ENCODE measurements at regions of chr11 and their contacts with region 1.

Region 1: DNA sequence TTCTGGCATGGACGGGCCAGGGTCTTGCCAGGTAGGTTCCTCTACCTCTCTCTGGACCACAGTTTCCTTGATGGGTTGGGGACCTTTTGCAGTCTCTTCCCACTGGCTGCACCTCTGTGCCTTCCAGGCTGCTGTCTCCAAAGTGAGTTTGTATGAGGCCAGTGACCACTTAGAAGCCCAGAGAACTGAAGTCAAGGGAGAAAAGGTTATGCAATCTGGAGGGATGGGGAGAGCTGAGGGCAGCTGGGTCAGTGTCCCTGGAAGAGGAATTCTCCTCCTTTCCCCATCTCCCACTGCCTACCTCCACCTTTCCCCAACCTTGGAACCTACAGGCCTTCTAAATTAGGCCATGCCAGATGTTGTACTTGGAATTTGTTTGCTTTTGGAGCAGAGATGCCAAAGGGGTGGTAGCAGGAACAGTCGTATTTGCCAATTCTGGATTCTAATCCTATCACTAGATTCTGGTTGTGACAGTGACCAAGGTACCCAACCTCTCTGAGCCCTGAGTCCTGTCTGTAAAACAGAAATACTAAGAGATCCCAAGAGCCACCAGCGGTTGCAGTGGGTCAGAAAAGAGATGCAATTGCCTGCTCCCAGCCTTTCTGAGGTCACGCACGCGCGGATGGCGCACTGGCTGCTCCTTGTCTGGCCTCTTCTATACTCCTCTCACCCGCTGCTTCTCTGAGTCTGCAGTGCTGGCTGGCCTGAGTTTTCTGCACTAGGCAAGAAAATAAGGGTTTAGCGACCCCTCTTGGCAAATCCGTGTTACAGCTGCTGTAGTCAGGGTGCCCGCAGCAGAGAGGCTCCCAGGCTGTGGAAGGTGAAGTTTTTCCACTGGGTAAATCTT is 10.7 kb upstream of the ACCSL start:
- DNase-seq: peak; percentile 94
- H3K4me3 ChIP-seq: no peak overlapping the region
- H3K27ac ChIP-seq: no peak overlapping the region
- H3K4me1 ChIP-seq: no peaks in the 10 kb centered on the region
- H3K27me3 ChIP-seq: no peaks in the 10 kb centered on the region
- CTCF ChIP-seq: peak; percentile 100

Region 2: GRCh38 chr11:43944761-43945311 is 92.2 kb before region 1 on chr11:
- CTCF ChIA-PET with region 1: interaction called, 4 read pairs
- POLR2A ChIA-PET with region 1: no interaction called
- intact Hi-C with region 1: loop called (anchors 2 kb)
- DNase-seq: peak; percentile 73
- H3K4me3 ChIP-seq: no peak overlapping the region
- H3K27ac ChIP-seq: no peak overlapping the region
- H3K4me1 ChIP-seq: peaks cover 21% of the 10 kb centered on the region
- H3K27me3 ChIP-seq: peaks cover 67% of the 10 kb centered on the region
- CTCF ChIP-seq: peak; percentile 100

Region 3: DNA sequence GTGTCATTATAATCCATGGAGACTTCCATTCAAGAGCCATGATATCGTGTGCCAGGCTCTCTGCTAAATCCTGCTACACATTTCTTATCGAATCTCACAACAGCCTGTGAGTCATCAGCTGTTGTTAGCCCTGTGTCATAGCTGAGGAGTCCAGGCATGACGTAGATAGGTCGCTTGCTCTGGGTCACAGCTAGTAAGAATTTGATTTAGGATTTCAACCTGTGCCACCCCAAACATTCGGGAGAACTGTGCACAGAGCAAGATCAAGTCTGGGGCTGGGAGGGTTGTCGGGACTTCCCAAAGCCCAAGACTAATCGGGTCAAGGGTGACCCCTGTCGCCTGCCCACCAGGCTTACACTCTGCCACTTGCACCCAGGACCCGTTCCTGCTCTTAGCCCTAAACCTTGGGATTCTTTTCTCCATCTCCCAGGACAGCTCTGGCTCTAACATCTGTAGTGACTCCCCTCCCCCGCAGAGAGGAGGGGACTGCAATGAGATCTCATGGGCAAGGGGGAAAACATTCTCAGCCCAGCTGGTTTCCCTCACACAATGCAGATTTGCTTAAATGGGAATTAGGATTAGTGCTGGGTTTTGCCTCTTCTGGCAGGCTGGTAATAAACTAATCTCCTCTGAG is 724.0 kb after region 1 on chr11:
- CTCF ChIA-PET with region 1: no interaction called
- POLR2A ChIA-PET with region 1: no interaction called
- intact Hi-C with region 1: no loop called
- DNase-seq: peak; percentile 93
- H3K4me3 ChIP-seq: no peak overlapping the region
- H3K27ac ChIP-seq: peak overlapping the region; percentile 60
- H3K4me1 ChIP-seq: peaks cover 48% of the 10 kb centered on the region
- H3K27me3 ChIP-seq: no peaks in the 10 kb centered on the region
- CTCF ChIP-seq: no peak

Measured in A673 (cell line).